ENCODE measurements at regions of chr3 and their contacts with region 1.

Region 1: GRCh38 chr3:141355242-141355641 is 13.1 kb upstream of the ZBTB38 start:
- DNase-seq: no peak
- H3K4me3 ChIP-seq: no peak overlapping the region
- H3K27ac ChIP-seq: no peak overlapping the region
- H3K4me1 ChIP-seq: no peaks in the 10 kb centered on the region
- H3K27me3 ChIP-seq: no peaks in the 10 kb centered on the region
- CTCF ChIP-seq: no peak
- POLR2A ChIP-seq: no peak

Region 2: DNA sequence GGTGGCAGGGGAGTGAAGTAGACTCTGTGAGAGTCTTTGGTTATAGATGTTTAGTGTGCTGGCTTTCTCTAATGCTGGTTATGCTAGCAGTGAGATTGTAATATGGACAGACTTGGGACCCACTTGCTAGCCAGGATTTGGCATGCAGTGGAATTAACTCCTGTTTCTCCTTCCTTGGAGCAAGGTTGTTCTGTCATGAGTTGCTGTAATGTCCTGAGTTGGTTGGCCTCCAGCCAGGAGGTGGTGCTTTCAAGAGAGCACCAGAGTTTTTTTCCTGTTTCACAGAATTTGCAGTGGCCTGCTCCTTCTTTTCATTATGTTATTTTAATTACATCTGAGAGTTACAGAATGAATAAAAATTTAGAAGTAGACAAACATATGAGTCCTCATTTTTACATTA is 211.7 kb before region 1 on chr3:
- intact Hi-C with region 1: no loop called
- DNase-seq: peak; percentile 41 to 53
- H3K4me3 ChIP-seq: no peak overlapping the region
- H3K27ac ChIP-seq: no peak overlapping the region
- H3K4me1 ChIP-seq: no peaks in the 10 kb centered on the region
- H3K27me3 ChIP-seq: no peaks in the 10 kb centered on the region
- CTCF ChIP-seq: no peak
- POLR2A ChIP-seq: no peak

Region 3: DNA sequence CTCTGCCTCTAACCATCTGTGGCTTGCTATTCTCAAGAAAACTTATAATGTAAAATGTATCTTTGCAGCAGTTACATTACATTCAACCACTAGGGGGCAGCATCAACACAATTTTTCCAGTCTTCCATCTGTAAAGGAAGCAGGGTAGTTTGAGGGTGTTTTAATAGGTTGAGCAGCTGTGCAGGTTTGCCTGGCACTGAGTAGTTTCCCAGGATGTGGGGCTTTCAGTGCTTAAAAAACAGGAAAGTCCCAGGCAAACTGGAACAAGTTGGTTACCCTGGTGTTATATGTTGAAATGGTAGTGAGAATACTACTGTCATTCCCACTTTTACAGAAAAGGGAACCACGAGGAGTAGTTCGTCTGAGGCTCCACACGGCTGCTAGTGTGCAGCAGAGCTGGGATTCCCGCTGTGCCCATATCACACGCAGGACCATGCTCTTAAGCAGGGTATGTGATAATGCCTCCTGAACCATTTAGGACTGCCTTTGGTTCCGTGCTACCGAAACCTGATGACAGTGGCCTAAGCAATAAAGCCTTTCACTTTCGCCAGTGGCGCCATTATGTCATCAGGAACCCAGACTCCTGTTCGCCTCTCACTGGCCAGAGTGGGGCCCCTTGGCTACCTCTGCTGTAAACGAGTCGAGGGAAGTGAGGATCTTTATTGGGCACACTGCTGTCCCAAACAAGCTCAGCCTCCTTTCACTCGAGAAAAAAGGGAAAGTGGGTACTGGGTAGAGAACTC is 51.6 kb before region 1 on chr3:
- intact Hi-C with region 1: loop called (anchors 5 kb)
- DNase-seq: peak in 1 of 2 donors; percentile 48
- H3K4me3 ChIP-seq: no peak overlapping the region
- H3K27ac ChIP-seq: no peak overlapping the region
- H3K4me1 ChIP-seq: peaks cover 0 to 4% of the 10 kb centered on the region in 2 donors
- H3K27me3 ChIP-seq: no peaks in the 10 kb centered on the region
- CTCF ChIP-seq: peak; percentile 61 to 95 (median 76)
- POLR2A ChIP-seq: no peak

Region 4: GRCh38 chr3:141530133-141530768 is 175.0 kb after region 1 on chr3:
- intact Hi-C with region 1: no loop called
- DNase-seq: no peak
- H3K4me3 ChIP-seq: no peak overlapping the region
- H3K27ac ChIP-seq: peak overlapping the region in 1 of 3 donors; percentile 11
- H3K4me1 ChIP-seq: peaks cover 4 to 6% of the 10 kb centered on the region in 2 donors
- H3K27me3 ChIP-seq: no peaks in the 10 kb centered on the region
- CTCF ChIP-seq: no peak
- POLR2A ChIP-seq: no peak

Measured in thyroid gland (tissue), 4 donors.